ENCODE measurements at regions of chr17 and their contacts with region 1.

Region 1: DNA sequence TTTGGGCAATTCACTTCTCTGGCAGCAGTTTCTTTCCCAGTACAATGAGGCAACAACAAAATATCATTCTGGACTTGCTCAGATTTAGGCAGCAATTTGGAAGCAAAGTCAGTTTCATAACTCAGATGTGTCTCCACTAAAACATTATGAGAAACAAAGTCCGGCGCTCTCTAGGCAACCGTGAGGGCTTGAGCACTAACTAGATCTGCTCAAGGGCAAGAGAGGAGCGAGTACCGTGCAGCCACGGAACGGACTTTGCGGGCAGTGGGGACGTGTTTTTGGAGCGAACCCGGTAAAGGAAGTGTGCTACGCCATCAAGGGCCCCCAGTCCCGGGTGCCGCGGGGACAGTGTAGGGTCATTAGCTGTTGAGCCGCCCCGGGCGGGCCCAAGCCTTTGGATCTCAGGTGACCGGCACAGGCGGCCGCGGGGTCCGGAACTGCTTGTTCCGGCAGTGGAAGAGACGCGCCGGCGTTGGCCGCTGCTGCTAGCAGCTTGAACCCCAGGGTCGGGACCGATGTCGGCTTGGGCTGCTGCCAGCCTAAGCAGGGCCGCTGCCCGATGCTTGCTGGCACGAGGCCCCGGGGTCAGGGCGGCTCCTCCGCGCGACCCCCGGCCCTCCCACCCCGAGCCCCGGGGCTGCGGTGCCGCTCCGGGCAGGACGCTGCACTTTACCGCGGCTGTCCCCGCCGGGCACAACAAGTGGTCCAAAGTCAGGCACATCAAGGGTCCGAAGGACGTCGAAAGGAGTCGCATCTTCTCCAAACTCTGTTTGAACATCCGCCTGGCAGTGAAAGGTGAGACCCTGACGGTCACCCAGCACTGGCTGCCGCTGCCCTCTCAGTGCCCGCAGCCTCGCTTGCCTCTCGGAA is at the start of gene TACO1:
- DNase-seq: peak; percentile 84 to 85
- ATAC-seq: peak; percentile 94 to 98 (median 97)
- H3K4me3 ChIP-seq: peak within 1 kb of the TSS; percentile 73 to 100 (median 96)
- H3K27ac ChIP-seq: peak within 1 kb of the TSS; percentile 68 to 98 (median 94)
- H3K4me1 ChIP-seq: peaks cover 0 to 29% (median 16%) of the 10 kb centered on the region in 9 donors
- H3K27me3 ChIP-seq: no peaks in the 10 kb centered on the region
- CTCF ChIP-seq: no peak
- total RNA-seq, gene TACO1: 37.2 to 51.4 (median 45.2) TPM

Region 2: DNA sequence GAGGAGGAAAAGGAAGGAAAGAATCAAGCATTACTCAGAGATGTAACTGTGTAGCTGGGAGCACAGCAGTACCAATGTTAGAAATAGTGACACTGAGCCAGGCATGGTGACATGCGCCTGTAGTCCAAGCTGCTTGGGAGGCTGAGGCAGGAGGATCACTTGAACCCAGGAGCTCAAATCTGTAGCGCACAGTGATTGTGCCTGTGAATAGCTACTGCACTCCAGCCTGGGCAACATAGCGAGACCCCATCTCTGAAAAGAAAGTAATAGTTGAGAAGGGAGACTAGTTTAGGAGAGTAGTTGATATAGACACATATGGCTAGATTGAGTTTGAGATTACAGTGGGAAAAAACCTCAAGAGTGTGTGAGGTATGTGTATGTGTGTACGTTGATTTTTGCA is 39.2 kb after region 1 on chr17:
- intact Hi-C with region 1: loop called in 1 of 10 experiments (anchors 1 kb)
- DNase-seq: no peak
- ATAC-seq: no peak
- H3K4me3 ChIP-seq: no peak overlapping the region
- H3K27ac ChIP-seq: no peak overlapping the region
- H3K4me1 ChIP-seq: peaks cover 0 to 77% (median 51%) of the 10 kb centered on the region in 9 donors
- H3K27me3 ChIP-seq: no peaks in the 10 kb centered on the region
- CTCF ChIP-seq: no peak

Region 3: DNA sequence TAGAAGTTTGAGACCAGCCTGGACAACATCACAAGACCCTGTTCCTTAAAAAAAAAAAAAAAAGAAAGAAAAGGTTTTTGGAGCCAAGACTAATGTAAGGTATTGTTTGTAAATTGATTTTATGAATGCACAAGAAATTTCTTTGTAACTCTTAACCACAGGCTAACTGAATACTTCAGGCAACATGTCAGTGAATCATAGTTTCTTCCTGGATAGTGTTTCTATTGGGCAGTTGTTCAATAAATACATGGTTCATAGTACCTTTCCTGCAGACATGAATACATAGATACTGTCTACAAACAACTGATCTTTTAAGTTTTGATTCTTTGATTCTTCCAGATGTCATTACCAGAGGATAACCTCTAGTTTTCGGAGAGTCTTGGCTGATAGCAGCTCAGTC is 184.8 kb after region 1 on chr17:
- intact Hi-C with region 1: no loop called
- DNase-seq: no peak
- ATAC-seq: no peak
- H3K4me3 ChIP-seq: no peak overlapping the region
- H3K27ac ChIP-seq: no peak overlapping the region
- H3K4me1 ChIP-seq: peaks cover 0 to 17% (median 6%) of the 10 kb centered on the region in 9 donors
- H3K27me3 ChIP-seq: no peaks in the 10 kb centered on the region
- CTCF ChIP-seq: no peak